ENCODE measurements at regions of chr15 and their contacts with region 1.

Region 1: GRCh38 chr15:41774062-41774881 is at the start of gene MAPKBP1:
- DNase-seq: peak; percentile 95 to 100 (median 97)
- ATAC-seq: peak; percentile 89 to 95 (median 92)
- H3K4me3 ChIP-seq: peak within 1 kb of the TSS; percentile 86 to 89
- H3K4me3 Mint-ChIP-seq: peak within 1 kb of the TSS; percentile 93 to 95 (median 94)
- H3K27ac ChIP-seq: peak within 1 kb of the TSS; percentile 81
- H3K27ac Mint-ChIP-seq: peak within 1 kb of the TSS; percentile 93 to 96
- H3K4me1 ChIP-seq: peaks cover 31 to 42% of the 10 kb centered on the region in 2 experiments
- H3K4me1 Mint-ChIP-seq: peaks cover 58 to 65% (median 63%) of the 10 kb centered on the region in 3 donors
- H3K27me3 ChIP-seq: no peaks in the 10 kb centered on the region
- H3K27me3 Mint-ChIP-seq: no peaks in the 10 kb centered on the region
- total RNA-seq, gene MAPKBP1: 37.0 to 44.8 (median 38.2) TPM

Region 2: GRCh38 chr15:41811432-41812195 is 37.3 kb after region 1 on chr15:
- CTCF ChIA-PET with region 1: interaction called, 42 to 104 read pairs
- POLR2A ChIA-PET with region 1: interaction called in 1 of 2 experiments, 4 read pairs
- DNase-seq: peak; percentile 43 to 83 (median 69)
- ATAC-seq: peak; percentile 89 to 98 (median 90)
- H3K4me3 ChIP-seq: no peak overlapping the region
- H3K4me3 Mint-ChIP-seq: no peak overlapping the region
- H3K27ac ChIP-seq: no peak overlapping the region
- H3K27ac Mint-ChIP-seq: peak overlapping the region in 1 of 2 donors; percentile 48
- H3K4me1 ChIP-seq: peaks cover 0 to 19% of the 10 kb centered on the region in 2 experiments
- H3K4me1 Mint-ChIP-seq: peaks cover 17% of the 10 kb centered on the region in 3 donors
- H3K27me3 ChIP-seq: no peaks in the 10 kb centered on the region
- H3K27me3 Mint-ChIP-seq: no peaks in the 10 kb centered on the region

Region 3: DNA sequence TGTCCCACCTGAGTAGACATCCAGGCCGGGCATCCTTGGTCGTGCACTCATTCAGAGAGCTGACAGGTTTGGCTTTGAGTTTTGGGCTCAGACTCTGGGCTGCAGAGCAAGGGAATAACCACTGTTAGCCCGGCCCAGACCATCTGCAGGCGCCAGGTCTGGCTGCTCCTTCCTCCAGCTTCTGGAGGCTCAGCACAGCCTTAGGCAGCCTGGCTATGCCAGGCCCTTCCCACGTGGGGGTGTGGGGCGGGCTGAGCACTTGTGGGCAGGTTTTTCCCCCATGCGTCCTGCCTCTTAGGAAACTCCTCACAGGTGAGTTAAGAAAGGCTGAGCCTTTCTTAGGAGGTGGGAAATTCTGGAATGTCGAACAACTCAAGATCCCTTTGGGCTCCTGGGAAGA is 75.6 kb after region 1 on chr15:
- CTCF ChIA-PET with region 1: no interaction called
- POLR2A ChIA-PET with region 1: no interaction called
- DNase-seq: no peak
- ATAC-seq: peak in 1 of 4 experiments; percentile 23
- H3K4me3 ChIP-seq: no peak overlapping the region
- H3K4me3 Mint-ChIP-seq: no peak overlapping the region
- H3K27ac ChIP-seq: no peak overlapping the region
- H3K27ac Mint-ChIP-seq: no peak overlapping the region
- H3K4me1 ChIP-seq: no peaks in the 10 kb centered on the region
- H3K4me1 Mint-ChIP-seq: no peaks in the 10 kb centered on the region
- H3K27me3 ChIP-seq: peaks cover 0 to 9% of the 10 kb centered on the region in 2 experiments
- H3K27me3 Mint-ChIP-seq: no peaks in the 10 kb centered on the region

Region 4: GRCh38 chr15:41894791-41895463 is 120.7 kb after region 1 on chr15:
- CTCF ChIA-PET with region 1: interaction called, 5 to 12 read pairs
- POLR2A ChIA-PET with region 1: no interaction called
- DNase-seq: peak; percentile 75 to 93 (median 87)
- ATAC-seq: peak; percentile 97 to 99 (median 98)
- H3K4me3 ChIP-seq: peak overlapping the region in 1 of 2 donors; percentile 39
- H3K4me3 Mint-ChIP-seq: peak overlapping the region; percentile 58 to 68 (median 66)
- H3K27ac ChIP-seq: peak overlapping the region; percentile 93
- H3K27ac Mint-ChIP-seq: peak overlapping the region; percentile 94 to 98
- H3K4me1 ChIP-seq: peaks cover 22 to 52% of the 10 kb centered on the region in 2 experiments
- H3K4me1 Mint-ChIP-seq: peaks cover 25 to 50% (median 31%) of the 10 kb centered on the region in 3 donors
- H3K27me3 ChIP-seq: no peaks in the 10 kb centered on the region
- H3K27me3 Mint-ChIP-seq: no peaks in the 10 kb centered on the region

Region 5: GRCh38 chr15:41917767-41918430 is 143.6 kb after region 1 on chr15:
- CTCF ChIA-PET with region 1: no interaction called
- POLR2A ChIA-PET with region 1: no interaction called
- DNase-seq: no peak
- ATAC-seq: no peak
- H3K4me3 ChIP-seq: no peak overlapping the region
- H3K4me3 Mint-ChIP-seq: no peak overlapping the region
- H3K27ac ChIP-seq: no peak overlapping the region
- H3K27ac Mint-ChIP-seq: no peak overlapping the region
- H3K4me1 ChIP-seq: peaks cover 0 to 4% of the 10 kb centered on the region in 2 experiments
- H3K4me1 Mint-ChIP-seq: peaks cover 5 to 14% (median 8%) of the 10 kb centered on the region in 3 donors
- H3K27me3 ChIP-seq: no peaks in the 10 kb centered on the region
- H3K27me3 Mint-ChIP-seq: no peaks in the 10 kb centered on the region

Region 6: DNA sequence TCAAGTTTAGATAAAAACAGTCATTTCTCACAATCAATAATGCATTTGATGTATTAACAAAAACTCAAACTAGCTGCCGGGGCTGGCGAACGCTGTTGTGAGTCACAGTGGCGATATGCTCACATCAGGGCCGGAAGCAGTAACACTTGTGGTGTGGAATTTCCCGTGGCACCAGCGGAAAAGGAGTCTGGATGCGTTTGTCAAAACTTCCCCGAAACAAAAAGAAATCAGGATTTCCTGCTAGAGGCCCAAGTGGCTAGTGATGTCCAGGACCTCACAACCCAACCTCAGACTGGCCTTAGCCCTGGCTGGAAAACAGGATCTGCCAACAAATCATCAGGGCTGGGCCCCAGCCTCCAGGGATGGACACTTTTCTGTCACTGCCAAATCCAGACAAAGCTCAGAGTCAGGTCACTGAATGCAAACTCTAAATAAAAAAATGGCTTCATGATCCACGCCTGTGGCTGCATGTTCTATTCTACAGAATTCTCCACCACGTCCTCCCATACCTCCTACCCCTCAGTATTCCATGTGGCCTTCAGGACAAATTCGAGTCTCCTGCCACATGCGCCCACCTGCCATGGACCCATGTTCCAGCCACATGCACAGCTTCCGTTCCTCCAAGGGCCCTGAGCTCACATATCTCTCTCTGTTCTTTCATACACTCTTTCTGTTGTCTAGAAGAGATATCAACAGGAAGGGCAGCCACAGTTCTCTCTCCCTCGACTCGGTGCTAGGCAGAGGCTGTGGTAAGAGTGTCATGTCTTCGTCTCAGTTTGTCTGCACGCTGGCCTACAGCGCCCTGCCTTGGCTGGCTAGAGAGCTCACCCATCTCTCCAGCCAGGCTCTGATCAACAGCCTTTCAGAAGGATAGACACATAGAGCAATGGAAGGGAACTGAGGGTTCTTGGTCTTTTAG is 162.6 kb after region 1 on chr15:
- CTCF ChIA-PET with region 1: interaction called in 1 of 2 experiments, 41 read pairs
- POLR2A ChIA-PET with region 1: interaction called, 3 to 7 read pairs
- DNase-seq: peak; percentile 58 to 92 (median 76)
- ATAC-seq: peak; percentile 84 to 88 (median 88)
- H3K4me3 ChIP-seq: peak overlapping the region in 1 of 2 donors; percentile 2
- H3K4me3 Mint-ChIP-seq: peak overlapping the region; percentile 58 to 82 (median 77)
- H3K27ac ChIP-seq: peak overlapping the region; percentile 96
- H3K27ac Mint-ChIP-seq: peak overlapping the region; percentile 98 to 100
- H3K4me1 ChIP-seq: peaks cover 52 to 68% of the 10 kb centered on the region in 2 experiments
- H3K4me1 Mint-ChIP-seq: peaks cover 62 to 75% (median 71%) of the 10 kb centered on the region in 3 donors
- H3K27me3 ChIP-seq: no peaks in the 10 kb centered on the region
- H3K27me3 Mint-ChIP-seq: no peaks in the 10 kb centered on the region

Measured in T-cell (primary cell).